ENCODE measurements at regions of chr4 and their contacts with region 1.

Region 1: GRCh38 chr4:3442959-3443749 is 1.4 kb downstream of the HGFAC start:
- DNase-seq: peak; percentile 77
- ATAC-seq: peak; percentile 85
- H3K4me3 ChIP-seq: no peak overlapping the region
- H3K4me3 Mint-ChIP-seq: no peak overlapping the region
- H3K27ac ChIP-seq: no peak overlapping the region
- H3K27ac Mint-ChIP-seq: no peak overlapping the region
- H3K4me1 ChIP-seq: peaks cover 0 to 10% of the 10 kb centered on the region in 2 donors
- H3K4me1 Mint-ChIP-seq: no peaks in the 10 kb centered on the region
- H3K27me3 ChIP-seq: peaks cover 0 to 5% (median 0%) of the 10 kb centered on the region in 4 experiments
- H3K27me3 Mint-ChIP-seq: no peaks in the 10 kb centered on the region
- CTCF ChIP-seq: peak; percentile 98

Region 2: DNA sequence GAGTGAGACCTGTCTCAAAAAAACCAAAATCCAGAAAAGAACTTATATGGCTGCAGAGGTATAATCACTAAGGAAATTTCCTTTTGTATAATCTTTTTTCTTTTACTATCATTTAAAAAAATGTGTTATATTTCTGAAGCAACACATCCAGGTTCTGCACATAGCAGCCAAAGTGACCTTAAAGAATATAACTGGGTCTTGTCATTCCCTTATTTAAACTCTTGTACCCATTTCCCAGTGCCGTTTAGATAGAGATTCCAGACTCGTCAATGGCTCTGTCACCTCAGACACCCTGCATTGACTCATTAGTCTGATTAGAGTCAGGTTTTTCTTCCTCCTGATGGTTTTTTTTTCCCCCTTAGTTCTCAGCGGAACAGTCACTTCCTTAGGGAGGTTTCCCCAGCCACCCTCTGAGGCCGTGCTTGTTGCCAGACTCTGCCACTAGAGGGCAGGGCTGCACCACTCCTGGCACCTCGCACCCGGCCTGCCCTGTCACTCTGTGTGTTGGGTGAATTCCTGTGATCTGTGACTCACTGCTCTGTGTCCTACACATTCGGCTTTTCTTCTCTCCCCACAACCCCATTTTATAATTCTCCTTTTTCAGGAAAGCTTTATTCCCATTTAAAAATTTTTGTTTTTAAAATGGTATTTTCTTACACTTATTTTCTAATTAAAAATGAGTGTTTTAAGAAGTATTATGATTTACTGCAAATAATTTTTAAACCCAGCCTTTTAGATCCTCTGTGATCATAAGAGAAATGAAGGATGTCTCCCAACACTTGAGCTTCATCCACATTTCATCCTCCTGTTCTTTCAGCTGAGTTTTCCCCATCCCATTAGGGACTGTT is 336.6 kb before region 1 on chr4:
- CTCF ChIA-PET with region 1: no interaction called
- POLR2A ChIA-PET with region 1: no interaction called
- intact Hi-C with region 1: loop called (anchors 1 kb)
- DNase-seq: peak; percentile 86
- ATAC-seq: peak; percentile 99
- H3K4me3 ChIP-seq: no peak overlapping the region
- H3K4me3 Mint-ChIP-seq: no peak overlapping the region
- H3K27ac ChIP-seq: no peak overlapping the region
- H3K27ac Mint-ChIP-seq: peak overlapping the region; percentile 82
- H3K4me1 ChIP-seq: peaks cover 0 to 6% of the 10 kb centered on the region in 2 donors
- H3K4me1 Mint-ChIP-seq: peaks cover 8% of the 10 kb centered on the region
- H3K27me3 ChIP-seq: no peaks in the 10 kb centered on the region
- H3K27me3 Mint-ChIP-seq: no peaks in the 10 kb centered on the region
- CTCF ChIP-seq: peak; percentile 96

Region 3: DNA sequence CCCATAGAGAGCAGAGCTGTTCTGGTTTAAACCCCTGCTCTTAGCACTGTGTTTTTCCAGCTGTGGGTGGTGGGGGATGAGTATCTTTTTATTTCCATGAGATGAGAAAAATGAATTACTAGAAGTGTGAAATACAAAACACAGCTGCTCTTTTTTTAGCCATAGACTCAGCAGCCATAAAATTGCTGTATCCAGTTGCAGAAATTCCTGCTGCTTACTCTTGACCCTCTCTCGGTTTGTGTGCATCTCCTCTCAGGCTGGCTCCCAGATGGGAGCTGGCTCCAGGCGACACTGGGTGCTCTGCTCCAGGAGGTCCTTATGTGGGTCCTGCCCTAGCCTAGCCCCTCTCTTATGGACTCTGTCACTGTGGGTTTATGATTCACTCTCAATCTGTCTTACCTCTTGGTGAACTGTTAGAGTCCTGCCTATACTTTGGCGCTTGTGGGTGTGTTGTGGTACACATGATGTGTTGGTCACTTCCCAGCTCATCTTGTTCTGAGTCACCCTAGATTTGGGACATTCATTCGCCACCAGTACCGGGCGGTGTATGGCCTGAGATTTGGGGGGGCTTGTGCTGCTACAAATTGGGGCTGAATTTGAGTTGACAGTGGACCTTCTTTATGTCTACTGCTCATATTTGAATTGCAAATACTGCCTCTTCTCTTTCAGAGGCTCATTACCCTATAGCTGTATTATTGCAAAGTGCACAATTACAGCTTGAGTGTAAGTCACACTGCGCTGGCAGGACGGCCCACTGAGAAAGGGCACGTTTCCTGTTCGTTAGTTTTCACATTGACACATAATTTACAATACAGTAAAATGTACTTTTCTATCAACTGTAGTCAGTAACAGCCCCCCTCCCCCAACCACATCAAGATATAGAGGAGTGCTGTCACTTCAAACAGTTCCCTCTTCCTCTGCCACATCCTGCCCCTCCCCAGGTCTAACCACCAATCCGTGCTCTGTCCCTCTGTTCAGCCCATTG is 241.1 kb before region 1 on chr4:
- CTCF ChIA-PET with region 1: no interaction called
- POLR2A ChIA-PET with region 1: no interaction called
- intact Hi-C with region 1: loop called (anchors 10 kb)
- DNase-seq: peak; percentile 35
- ATAC-seq: peak; percentile 67
- H3K4me3 ChIP-seq: no peak overlapping the region
- H3K4me3 Mint-ChIP-seq: peak overlapping the region; percentile 26
- H3K27ac ChIP-seq: peak overlapping the region in 1 of 2 donors; percentile 51
- H3K27ac Mint-ChIP-seq: peak overlapping the region; percentile 61
- H3K4me1 ChIP-seq: peaks cover 16 to 18% of the 10 kb centered on the region in 2 donors
- H3K4me1 Mint-ChIP-seq: peaks cover 19% of the 10 kb centered on the region
- H3K27me3 ChIP-seq: no peaks in the 10 kb centered on the region
- H3K27me3 Mint-ChIP-seq: no peaks in the 10 kb centered on the region
- CTCF ChIP-seq: no peak

Region 4: DNA sequence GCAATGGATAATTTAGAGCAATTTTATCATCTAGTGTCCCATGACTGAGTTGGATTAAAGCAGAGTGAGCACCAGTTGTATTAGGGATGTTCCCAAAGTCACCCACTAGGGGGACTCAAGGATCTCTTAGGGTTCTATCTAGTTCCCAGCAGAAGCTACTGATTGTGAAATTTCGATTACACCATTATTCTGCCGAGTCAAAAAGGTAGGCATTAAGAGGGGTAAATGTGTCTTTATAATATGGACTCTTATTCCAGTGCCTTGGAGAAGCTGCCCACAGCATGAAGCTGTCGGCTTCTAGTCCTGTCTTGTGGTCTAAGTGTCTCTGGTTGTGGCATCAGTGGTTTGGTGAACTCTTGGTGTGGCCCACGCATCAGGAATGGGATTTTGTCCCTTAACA is 97.0 kb before region 1 on chr4:
- CTCF ChIA-PET with region 1: interaction called, 56 read pairs
- POLR2A ChIA-PET with region 1: no interaction called
- intact Hi-C with region 1: no loop called
- DNase-seq: peak; percentile 82
- ATAC-seq: peak; percentile 70
- H3K4me3 ChIP-seq: no peak overlapping the region
- H3K4me3 Mint-ChIP-seq: no peak overlapping the region
- H3K27ac ChIP-seq: no peak overlapping the region
- H3K27ac Mint-ChIP-seq: no peak overlapping the region
- H3K4me1 ChIP-seq: peaks cover 0 to 4% of the 10 kb centered on the region in 2 donors
- H3K4me1 Mint-ChIP-seq: peaks cover 7% of the 10 kb centered on the region
- H3K27me3 ChIP-seq: no peaks in the 10 kb centered on the region
- H3K27me3 Mint-ChIP-seq: no peaks in the 10 kb centered on the region
- CTCF ChIP-seq: peak; percentile 99

Region 5: GRCh38 chr4:3369781-3370674 is 73.1 kb before region 1 on chr4:
- CTCF ChIA-PET with region 1: interaction called, 7 read pairs
- POLR2A ChIA-PET with region 1: no interaction called
- intact Hi-C with region 1: loop called (anchors 2 kb)
- DNase-seq: no peak
- ATAC-seq: no peak
- H3K4me3 ChIP-seq: no peak overlapping the region
- H3K4me3 Mint-ChIP-seq: peak overlapping the region; percentile 18
- H3K27ac ChIP-seq: no peak overlapping the region
- H3K27ac Mint-ChIP-seq: no peak overlapping the region
- H3K4me1 ChIP-seq: peaks cover 28 to 42% of the 10 kb centered on the region in 2 donors
- H3K4me1 Mint-ChIP-seq: peaks cover 35% of the 10 kb centered on the region
- H3K27me3 ChIP-seq: peaks cover 0 to 25% (median 3%) of the 10 kb centered on the region in 4 experiments
- H3K27me3 Mint-ChIP-seq: peaks cover 10% of the 10 kb centered on the region
- CTCF ChIP-seq: no peak

Region 6: GRCh38 chr4:3388471-3389232 is 54.5 kb before region 1 on chr4:
- CTCF ChIA-PET with region 1: interaction called, 3 read pairs
- POLR2A ChIA-PET with region 1: no interaction called
- intact Hi-C with region 1: loop called (anchors 1 kb)
- DNase-seq: peak; percentile 75
- ATAC-seq: peak; percentile 67
- H3K4me3 ChIP-seq: peak overlapping the region in 4 of 5 experiments; percentile 13 to 58 (median 34)
- H3K4me3 Mint-ChIP-seq: peak overlapping the region; percentile 94
- H3K27ac ChIP-seq: peak overlapping the region; percentile 17 to 45
- H3K27ac Mint-ChIP-seq: peak overlapping the region; percentile 88
- H3K4me1 ChIP-seq: peaks cover 37 to 52% of the 10 kb centered on the region in 2 donors
- H3K4me1 Mint-ChIP-seq: peaks cover 48% of the 10 kb centered on the region
- H3K27me3 ChIP-seq: peaks cover 0 to 17% (median 3%) of the 10 kb centered on the region in 4 experiments
- H3K27me3 Mint-ChIP-seq: peaks cover 5% of the 10 kb centered on the region
- CTCF ChIP-seq: no peak